PC-3 (cell line): ENCODE measurements at regions of chr2 and their contacts with region 1.

Region 1: GRCh38 chr2:8303322-8303832 is 378.5 kb upstream of the ID2 start:
- DNase-seq: no peak
- ATAC-seq: no peak
- H3K4me3 ChIP-seq: no peak overlapping the region
- H3K27ac ChIP-seq: no peak overlapping the region
- H3K4me1 ChIP-seq: peaks cover 43% of the 10 kb centered on the region
- H3K27me3 ChIP-seq: no peaks in the 10 kb centered on the region
- CTCF ChIP-seq: no peak

Region 2: GRCh38 chr2:7725171-7725849 is 578.1 kb before region 1 on chr2:
- CTCF ChIA-PET with region 1: no interaction called
- POLR2A ChIA-PET with region 1: no interaction called
- intact Hi-C with region 1: loop called (anchors 1 kb)
- DNase-seq: peak; percentile 28
- ATAC-seq: peak; percentile 49
- H3K4me3 ChIP-seq: no peak overlapping the region
- H3K27ac ChIP-seq: no peak overlapping the region
- H3K4me1 ChIP-seq: peaks cover 4% of the 10 kb centered on the region; the same call in 1 of the 2 replicates
- H3K27me3 ChIP-seq: no peaks in the 10 kb centered on the region
- CTCF ChIP-seq: peak; percentile 47

Region 3: GRCh38 chr2:7748717-7749415 is 554.5 kb before region 1 on chr2:
- CTCF ChIA-PET with region 1: no interaction called
- POLR2A ChIA-PET with region 1: no interaction called
- intact Hi-C with region 1: loop called (anchors 5 kb)
- DNase-seq: peak; percentile 95
- ATAC-seq: peak; percentile 84
- H3K4me3 ChIP-seq: no peak overlapping the region
- H3K27ac ChIP-seq: peak overlapping the region; percentile 81
- H3K4me1 ChIP-seq: peaks cover 42% of the 10 kb centered on the region
- H3K27me3 ChIP-seq: no peaks in the 10 kb centered on the region
- CTCF ChIP-seq: no peak

Region 4: DNA sequence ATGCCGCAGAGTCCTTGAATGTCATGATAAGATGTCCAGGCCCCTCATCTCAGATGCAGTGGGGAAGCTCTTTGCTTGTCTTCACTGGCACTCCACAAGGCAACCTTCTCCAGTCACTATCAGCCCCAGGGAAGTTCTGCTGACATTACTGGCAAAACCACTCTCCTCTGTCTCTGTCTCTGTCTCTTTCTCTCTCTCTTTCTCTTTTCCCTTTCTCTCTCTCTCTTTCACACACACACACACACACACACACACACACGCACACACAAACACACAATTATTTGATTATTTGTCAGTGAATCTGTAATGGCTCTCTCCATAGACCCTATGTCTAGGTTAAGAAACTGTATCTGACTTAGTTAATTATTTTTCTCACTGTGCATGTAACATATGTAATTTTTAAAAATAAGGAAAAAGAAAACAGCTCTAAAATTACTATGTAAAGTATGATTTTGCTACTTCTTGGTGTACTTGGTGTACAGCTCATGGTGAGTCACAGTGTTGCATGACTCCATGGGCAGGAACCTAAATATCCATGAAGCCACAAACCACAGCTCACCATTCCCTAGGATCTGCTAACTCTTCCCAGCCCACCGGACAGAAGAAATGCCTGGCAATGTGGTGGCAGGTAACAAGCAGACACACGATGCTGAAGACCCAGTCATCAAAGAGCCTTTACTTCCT is 216.4 kb before region 1 on chr2:
- CTCF ChIA-PET with region 1: no interaction called
- POLR2A ChIA-PET with region 1: no interaction called
- intact Hi-C with region 1: loop called (anchors 10 kb)
- DNase-seq: peak; percentile 92
- ATAC-seq: peak; percentile 98
- H3K4me3 ChIP-seq: no peak overlapping the region
- H3K27ac ChIP-seq: peak overlapping the region; percentile 84
- H3K4me1 ChIP-seq: peaks cover 45% of the 10 kb centered on the region
- H3K27me3 ChIP-seq: no peaks in the 10 kb centered on the region
- CTCF ChIP-seq: no peak

Region 5: GRCh38 chr2:8193686-8194615 is 109.4 kb before region 1 on chr2:
- CTCF ChIA-PET with region 1: no interaction called
- POLR2A ChIA-PET with region 1: no interaction called
- intact Hi-C with region 1: loop called (anchors 5 kb)
- DNase-seq: no peak
- ATAC-seq: no peak
- H3K4me3 ChIP-seq: no peak overlapping the region
- H3K27ac ChIP-seq: no peak overlapping the region
- H3K4me1 ChIP-seq: peaks cover 4% of the 10 kb centered on the region
- H3K27me3 ChIP-seq: no peaks in the 10 kb centered on the region
- CTCF ChIP-seq: no peak

Region 6: GRCh38 chr2:8488001-8488738 is 184.8 kb after region 1 on chr2:
- CTCF ChIA-PET with region 1: no interaction called
- POLR2A ChIA-PET with region 1: no interaction called
- intact Hi-C with region 1: loop called (anchors 5 kb)
- DNase-seq: no peak
- ATAC-seq: no peak
- H3K4me3 ChIP-seq: no peak overlapping the region
- H3K27ac ChIP-seq: no peak overlapping the region
- H3K4me1 ChIP-seq: peaks cover 4% of the 10 kb centered on the region
- H3K27me3 ChIP-seq: no peaks in the 10 kb centered on the region
- CTCF ChIP-seq: no peak